Activated CD4-positive, alpha-beta T cell treated with anti-CD3 and anti-CD28 coated beads for 36 hours (primary cell): ENCODE measurements at regions of chr5 and their contacts with region 1.

Region 1: DNA sequence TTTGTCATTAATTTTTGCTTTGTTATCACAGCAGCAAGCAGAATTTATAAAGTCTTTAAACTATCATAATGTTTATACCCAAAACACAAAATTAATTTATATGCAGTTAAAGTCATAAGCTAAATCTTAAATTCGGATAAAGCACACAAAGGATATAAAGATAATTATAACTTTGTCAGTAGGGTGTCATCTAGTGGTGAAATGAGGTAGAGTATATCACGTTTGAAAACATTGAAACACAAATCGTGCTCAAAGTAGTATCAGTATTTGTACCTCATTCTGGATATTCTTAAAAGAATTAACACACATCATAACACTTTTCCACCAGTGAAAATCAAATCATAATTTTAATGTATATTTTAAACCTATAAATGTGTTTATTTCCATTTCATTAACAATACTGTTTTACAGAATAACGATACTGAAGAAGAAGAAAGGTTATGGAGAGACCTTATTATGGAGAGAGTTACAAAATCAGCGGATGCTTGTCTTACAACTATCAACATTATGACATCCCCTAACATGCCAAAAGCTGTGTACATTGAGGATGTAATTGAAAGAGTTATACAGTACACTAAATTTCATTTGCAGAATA is 129.5 kb downstream of the NIPBL start:
- DNase-seq: no peak
- ATAC-seq: no peak
- H3K4me3 Mint-ChIP-seq: no peak overlapping the region
- H3K27ac Mint-ChIP-seq: no peak overlapping the region
- H3K4me1 Mint-ChIP-seq: no peaks in the 10 kb centered on the region
- H3K27me3 Mint-ChIP-seq: no peaks in the 10 kb centered on the region

Region 2: DNA sequence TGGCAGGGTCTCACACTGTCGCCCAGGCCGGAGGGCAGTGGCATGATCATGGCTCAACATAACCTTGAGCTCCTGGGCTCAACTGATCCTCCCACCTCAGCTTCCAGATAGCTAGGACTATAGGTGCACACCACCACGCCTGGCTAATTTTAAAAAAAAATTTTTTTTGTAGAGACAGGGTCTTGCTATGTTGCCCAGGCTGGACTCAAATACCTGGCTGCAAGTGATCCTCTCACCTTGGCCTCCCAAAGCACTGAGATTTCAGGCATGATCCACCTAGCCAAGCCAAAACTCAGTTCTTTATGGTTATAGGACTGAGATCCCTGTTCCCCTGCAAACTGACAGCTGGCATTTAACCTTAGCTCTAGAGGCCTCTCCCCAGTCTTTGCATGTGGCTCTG is 859.7 kb before region 1 on chr5:
- CTCF ChIA-PET with region 1: no interaction called
- POLR2A ChIA-PET with region 1: no interaction called
- intact Hi-C with region 1: no loop called
- DNase-seq: no peak
- ATAC-seq: no peak
- H3K4me3 Mint-ChIP-seq: no peak overlapping the region
- H3K27ac Mint-ChIP-seq: no peak overlapping the region
- H3K4me1 Mint-ChIP-seq: peaks cover 29% of the 10 kb centered on the region
- H3K27me3 Mint-ChIP-seq: no peaks in the 10 kb centered on the region

Region 3: DNA sequence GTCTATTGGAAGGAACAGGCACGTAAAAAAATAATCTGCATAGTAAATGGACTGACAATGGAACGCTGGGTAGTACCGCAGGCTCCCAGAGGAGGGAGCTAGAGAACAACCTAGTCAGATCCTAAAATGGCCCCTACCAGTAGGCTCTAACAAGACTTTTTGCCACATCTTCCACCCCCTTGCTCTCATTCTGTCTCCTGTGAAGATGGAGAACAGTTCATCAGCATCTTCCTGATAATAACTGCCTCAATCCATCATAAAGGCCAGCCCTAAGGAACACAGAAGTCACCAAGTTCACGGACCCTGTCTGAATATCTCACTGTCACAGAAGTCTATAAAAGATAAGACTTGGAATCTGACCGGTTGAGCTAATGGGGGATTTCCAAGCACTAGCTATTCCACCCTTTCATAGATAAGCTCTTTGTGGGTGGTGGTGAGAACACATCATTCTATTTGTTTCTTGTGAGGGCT is 266.3 kb before region 1 on chr5:
- CTCF ChIA-PET with region 1: interaction called, 29 read pairs
- POLR2A ChIA-PET with region 1: no interaction called
- intact Hi-C with region 1: loop called in 1 of 2 experiments (anchors 2 kb)
- DNase-seq: peak; percentile 86
- ATAC-seq: peak; percentile 85
- H3K4me3 Mint-ChIP-seq: no peak overlapping the region
- H3K27ac Mint-ChIP-seq: no peak overlapping the region
- H3K4me1 Mint-ChIP-seq: peaks cover 8% of the 10 kb centered on the region
- H3K27me3 Mint-ChIP-seq: peaks cover 31% of the 10 kb centered on the region

Region 4: GRCh38 chr5:36744773-36745589 is 261.1 kb before region 1 on chr5:
- CTCF ChIA-PET with region 1: interaction called, 29 read pairs
- POLR2A ChIA-PET with region 1: no interaction called
- intact Hi-C with region 1: no loop called
- DNase-seq: peak; percentile 57
- ATAC-seq: peak; percentile 63
- H3K4me3 Mint-ChIP-seq: peak overlapping the region; percentile 72
- H3K27ac Mint-ChIP-seq: peak overlapping the region; percentile 4
- H3K4me1 Mint-ChIP-seq: peaks cover 10% of the 10 kb centered on the region
- H3K27me3 Mint-ChIP-seq: peaks cover 48% of the 10 kb centered on the region

Region 5: GRCh38 chr5:36854402-36855140 is 151.5 kb before region 1 on chr5:
- CTCF ChIA-PET with region 1: no interaction called
- POLR2A ChIA-PET with region 1: no interaction called
- intact Hi-C with region 1: no loop called
- DNase-seq: no peak
- ATAC-seq: no peak
- H3K4me3 Mint-ChIP-seq: no peak overlapping the region
- H3K27ac Mint-ChIP-seq: no peak overlapping the region
- H3K4me1 Mint-ChIP-seq: peaks cover 3% of the 10 kb centered on the region
- H3K27me3 Mint-ChIP-seq: peaks cover 5% of the 10 kb centered on the region

Region 6: DNA sequence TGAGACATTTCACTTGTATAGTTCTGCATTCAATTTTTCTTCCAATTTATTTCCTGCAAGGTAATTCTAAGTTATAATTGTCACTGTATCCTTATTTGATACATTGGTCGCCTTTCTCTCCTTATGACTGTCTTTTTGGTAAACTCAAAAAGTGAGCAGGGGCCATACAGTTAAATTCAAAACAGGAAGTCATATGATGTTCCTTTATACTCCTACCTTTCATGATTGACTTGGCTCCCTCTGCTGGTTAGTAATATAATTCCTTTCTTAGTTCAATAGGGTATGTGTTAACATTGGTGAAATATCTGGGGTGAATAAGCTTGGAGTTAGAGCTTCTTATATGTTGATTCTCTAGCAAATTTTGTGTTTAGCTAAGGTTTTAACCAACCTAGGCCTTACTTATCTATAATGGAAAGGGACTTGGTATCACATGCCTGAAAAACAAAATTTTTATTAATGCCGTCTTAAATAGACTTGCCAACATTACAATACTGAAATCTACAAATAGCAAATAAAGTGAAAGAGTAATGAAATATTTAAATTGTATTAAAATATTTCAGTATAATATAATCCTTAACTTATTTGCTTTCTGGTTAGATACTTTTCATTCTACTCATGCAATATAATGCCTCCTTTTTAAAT is 135.5 kb before region 1 on chr5:
- CTCF ChIA-PET with region 1: no interaction called
- POLR2A ChIA-PET with region 1: no interaction called
- intact Hi-C with region 1: loop called (anchors 2 to 5 kb)
- DNase-seq: no peak
- ATAC-seq: peak; percentile 82
- H3K4me3 Mint-ChIP-seq: no peak overlapping the region
- H3K27ac Mint-ChIP-seq: peak overlapping the region; percentile 28
- H3K4me1 Mint-ChIP-seq: peaks cover 27% of the 10 kb centered on the region
- H3K27me3 Mint-ChIP-seq: no peaks in the 10 kb centered on the region

Region 7: GRCh38 chr5:36944607-36945225 is 61.3 kb before region 1 on chr5:
- CTCF ChIA-PET with region 1: interaction called, 13 read pairs
- POLR2A ChIA-PET with region 1: no interaction called
- intact Hi-C with region 1: no loop called
- DNase-seq: no peak
- ATAC-seq: no peak
- H3K4me3 Mint-ChIP-seq: no peak overlapping the region
- H3K27ac Mint-ChIP-seq: no peak overlapping the region
- H3K4me1 Mint-ChIP-seq: peaks cover 49% of the 10 kb centered on the region
- H3K27me3 Mint-ChIP-seq: no peaks in the 10 kb centered on the region

Region 8: DNA sequence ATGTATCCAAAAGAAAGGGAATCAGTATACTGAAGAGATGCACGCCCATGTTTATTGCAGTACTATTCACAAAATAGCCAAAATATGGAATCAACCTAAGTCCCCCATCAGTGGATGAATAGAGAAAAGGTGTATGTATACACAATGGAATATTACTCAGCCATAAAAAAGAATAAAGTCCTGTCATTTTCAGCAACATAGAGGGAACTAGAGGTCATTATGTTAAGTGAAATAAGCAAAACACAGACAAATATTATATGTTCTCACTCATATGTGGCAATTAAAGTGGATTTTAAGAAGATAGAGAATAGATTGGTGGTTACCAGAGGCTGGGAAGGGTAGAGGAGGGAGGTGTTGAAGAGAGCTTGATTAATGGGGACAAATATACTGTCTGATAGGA is 40.9 kb before region 1 on chr5:
- CTCF ChIA-PET with region 1: no interaction called
- POLR2A ChIA-PET with region 1: no interaction called
- intact Hi-C with region 1: no loop called
- DNase-seq: no peak
- ATAC-seq: no peak
- H3K4me3 Mint-ChIP-seq: no peak overlapping the region
- H3K27ac Mint-ChIP-seq: no peak overlapping the region
- H3K4me1 Mint-ChIP-seq: no peaks in the 10 kb centered on the region
- H3K27me3 Mint-ChIP-seq: no peaks in the 10 kb centered on the region